ENCODE measurements at regions of chr12 and their contacts with region 1.

Region 1: GRCh38 chr12:14845350-14845750 is 2.0 kb upstream of the ART4 start:
- DNase-seq: peak in 2 of 5 donors; percentile 49 to 51
- ATAC-seq: peak; percentile 28 to 51 (median 41)
- H3K4me3 ChIP-seq: no peak overlapping the region
- H3K27ac ChIP-seq: peak overlapping the region in 10 of 12 donors; percentile 29 to 72 (median 46)
- H3K4me1 ChIP-seq: peaks cover 3 to 70% (median 50%) of the 10 kb centered on the region in 12 donors
- H3K27me3 ChIP-seq: no peaks in the 10 kb centered on the region
- CTCF ChIP-seq: peak; percentile 62 to 85 (median 76)
- POLR2A ChIP-seq: no peak

Region 2: DNA sequence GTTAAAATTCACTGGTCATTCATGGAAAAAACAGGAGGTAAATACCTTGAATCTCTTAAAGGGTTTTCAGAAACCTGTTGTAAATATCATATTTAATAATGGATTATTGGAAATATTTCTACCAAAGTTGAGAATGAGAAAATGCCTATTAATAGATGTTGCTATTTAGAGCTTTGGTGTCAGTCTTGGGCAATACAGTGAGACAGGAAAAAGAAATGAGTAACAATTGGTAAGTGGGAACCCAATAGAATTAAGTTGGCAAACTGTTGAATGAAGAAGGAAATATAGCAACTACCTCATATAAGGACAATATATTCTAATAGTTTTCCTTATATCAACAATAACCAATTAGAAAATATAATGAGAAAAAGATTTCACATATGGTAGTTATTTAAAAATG is 401.8 kb before region 1 on chr12:
- intact Hi-C with region 1: no loop called
- DNase-seq: no peak
- ATAC-seq: peak in 3 of 4 donors; percentile 51 to 81 (median 75)
- H3K4me3 ChIP-seq: no peak overlapping the region
- H3K27ac ChIP-seq: peak overlapping the region; percentile 17 to 70 (median 46)
- H3K4me1 ChIP-seq: peaks cover 0 to 29% (median 20%) of the 10 kb centered on the region in 12 donors
- H3K27me3 ChIP-seq: no peaks in the 10 kb centered on the region
- CTCF ChIP-seq: no peak
- POLR2A ChIP-seq: no peak

Region 3: GRCh38 chr12:14769969-14770495 is 75.3 kb before region 1 on chr12:
- intact Hi-C with region 1: loop called in 2 of 10 experiments (anchors 5 kb)
- DNase-seq: peak; percentile 79 to 91 (median 81)
- ATAC-seq: peak; percentile 53 to 67 (median 66)
- H3K4me3 ChIP-seq: peak overlapping the region; percentile 57 to 90 (median 84)
- H3K27ac ChIP-seq: peak overlapping the region; percentile 85 to 99 (median 96)
- H3K4me1 ChIP-seq: peaks cover 0 to 30% (median 10%) of the 10 kb centered on the region in 12 donors
- H3K27me3 ChIP-seq: no peaks in the 10 kb centered on the region
- CTCF ChIP-seq: peak; percentile 59 to 86 (median 70)
- POLR2A ChIP-seq: peak in 1 of 2 donors; percentile 28

Region 4: GRCh38 chr12:14803011-14803829 is 42.1 kb before region 1 on chr12 and contains the starts of genes C12orf60 and WBP11:
- intact Hi-C with region 1: loop called in 4 of 10 experiments (anchors 5 kb)
- DNase-seq: peak; percentile 92 to 97 (median 95)
- ATAC-seq: peak; percentile 100
- H3K4me3 ChIP-seq: peak within 1 kb of the TSS; percentile 74 to 95 (median 82)
- H3K27ac ChIP-seq: peak within 1 kb of the TSS; percentile 52 to 95 (median 88)
- H3K4me1 ChIP-seq: peaks cover 0 to 33% (median 17%) of the 10 kb centered on the region in 12 donors
- H3K27me3 ChIP-seq: no peaks in the 10 kb centered on the region
- CTCF ChIP-seq: no peak
- POLR2A ChIP-seq: peak; percentile 28 to 90
- total RNA-seq, gene C12orf60: 2.0 to 4.6 (median 3.4) TPM
- total RNA-seq, gene WBP11: 20.2 to 62.7 (median 52.7) TPM

Region 5: DNA sequence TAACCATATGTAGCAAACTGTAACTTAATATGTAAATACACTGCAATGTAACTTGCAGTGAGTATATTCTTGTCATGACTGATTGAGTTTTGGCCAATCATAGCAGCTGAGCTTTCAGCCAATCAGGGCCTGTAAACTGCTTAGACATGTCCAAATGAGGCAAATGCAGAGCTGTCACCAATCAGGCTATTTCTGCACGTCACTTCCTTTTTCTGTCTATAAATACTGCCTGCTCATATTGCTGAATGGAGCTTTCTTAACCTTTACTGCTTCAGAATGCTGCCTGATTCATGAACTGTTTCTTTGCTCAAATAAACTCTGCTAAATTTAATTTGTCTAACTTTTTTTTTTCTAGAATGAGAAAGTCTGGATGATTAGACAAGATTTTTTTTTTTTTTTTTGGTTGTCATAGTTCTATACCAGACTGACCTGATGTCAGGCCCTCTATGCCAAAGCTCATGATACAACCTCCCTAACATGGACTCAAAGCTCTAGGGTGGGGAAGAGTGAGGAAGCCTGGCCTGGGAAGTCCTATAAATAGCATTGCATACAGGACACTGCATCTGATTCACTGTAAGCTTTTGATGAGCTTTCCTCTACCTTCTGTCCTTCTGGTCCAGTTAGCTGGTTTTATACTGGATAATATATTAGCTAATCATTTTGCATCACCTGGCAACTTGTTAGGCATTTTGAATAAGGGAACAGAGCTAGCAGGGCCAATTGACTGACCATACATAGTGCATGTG is 28.3 kb after region 1 on chr12:
- intact Hi-C with region 1: no loop called
- DNase-seq: no peak
- ATAC-seq: peak in 3 of 4 donors; percentile 37 to 67 (median 52)
- H3K4me3 ChIP-seq: no peak overlapping the region
- H3K27ac ChIP-seq: no peak overlapping the region
- H3K4me1 ChIP-seq: peaks cover 0 to 6% (median 0%) of the 10 kb centered on the region in 12 donors
- H3K27me3 ChIP-seq: no peaks in the 10 kb centered on the region
- CTCF ChIP-seq: no peak
- POLR2A ChIP-seq: no peak

Region 6: GRCh38 chr12:14892726-14893505 is 47.6 kb after region 1 on chr12:
- intact Hi-C with region 1: loop called in 8 of 10 experiments (anchors 2 to 5 kb)
- DNase-seq: peak in 4 of 5 donors; percentile 45 to 59 (median 50)
- ATAC-seq: peak; percentile 77 to 88 (median 84)
- H3K4me3 ChIP-seq: peak overlapping the region in 2 of 12 donors; percentile 12 to 17
- H3K27ac ChIP-seq: peak overlapping the region; percentile 17 to 90 (median 74)
- H3K4me1 ChIP-seq: peaks cover 0 to 46% (median 17%) of the 10 kb centered on the region in 12 donors
- H3K27me3 ChIP-seq: no peaks in the 10 kb centered on the region
- CTCF ChIP-seq: peak in 6 of 12 donors; percentile 9 to 39 (median 28)
- POLR2A ChIP-seq: no peak

Region 7: GRCh38 chr12:14995583-14996425 is 150.5 kb after region 1 on chr12:
- intact Hi-C with region 1: loop called (anchors 1 to 2 kb)
- DNase-seq: no peak
- ATAC-seq: peak in 2 of 4 donors; percentile 47 to 55
- H3K4me3 ChIP-seq: no peak overlapping the region
- H3K27ac ChIP-seq: peak overlapping the region in 1 of 12 donors; percentile 6
- H3K4me1 ChIP-seq: peaks cover 0 to 22% (median 1%) of the 10 kb centered on the region in 12 donors
- H3K27me3 ChIP-seq: no peaks in the 10 kb centered on the region
- CTCF ChIP-seq: peak; percentile 62 to 88 (median 72)
- POLR2A ChIP-seq: no peak

Region 8: DNA sequence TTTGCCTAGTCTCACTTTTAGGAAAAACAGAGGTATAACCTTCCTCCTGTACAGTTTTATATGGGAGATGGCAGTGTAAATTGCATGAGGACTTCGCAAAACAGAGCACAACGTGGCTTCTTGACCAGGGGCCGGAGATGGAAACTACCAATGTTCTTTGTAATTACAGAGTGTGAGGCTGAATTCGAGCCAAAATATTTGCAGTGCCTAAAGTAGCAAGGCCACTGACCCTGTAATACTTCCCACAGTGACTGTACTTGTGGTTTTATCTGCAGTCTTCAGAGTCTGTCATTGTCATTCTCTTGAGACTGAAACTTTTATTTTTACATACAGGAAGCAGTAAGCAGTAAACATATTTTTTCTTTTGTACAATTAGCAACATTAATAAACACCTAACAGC is 277.0 kb after region 1 on chr12:
- intact Hi-C with region 1: no loop called
- DNase-seq: peak in 1 of 5 donors; percentile 33
- ATAC-seq: peak; percentile 49 to 69 (median 60)
- H3K4me3 ChIP-seq: no peak overlapping the region
- H3K27ac ChIP-seq: peak overlapping the region in 5 of 12 donors; percentile 1 to 33 (median 23)
- H3K4me1 ChIP-seq: peaks cover 0 to 8% (median 0%) of the 10 kb centered on the region in 12 donors
- H3K27me3 ChIP-seq: no peaks in the 10 kb centered on the region
- CTCF ChIP-seq: no peak
- POLR2A ChIP-seq: no peak

Region 9: DNA sequence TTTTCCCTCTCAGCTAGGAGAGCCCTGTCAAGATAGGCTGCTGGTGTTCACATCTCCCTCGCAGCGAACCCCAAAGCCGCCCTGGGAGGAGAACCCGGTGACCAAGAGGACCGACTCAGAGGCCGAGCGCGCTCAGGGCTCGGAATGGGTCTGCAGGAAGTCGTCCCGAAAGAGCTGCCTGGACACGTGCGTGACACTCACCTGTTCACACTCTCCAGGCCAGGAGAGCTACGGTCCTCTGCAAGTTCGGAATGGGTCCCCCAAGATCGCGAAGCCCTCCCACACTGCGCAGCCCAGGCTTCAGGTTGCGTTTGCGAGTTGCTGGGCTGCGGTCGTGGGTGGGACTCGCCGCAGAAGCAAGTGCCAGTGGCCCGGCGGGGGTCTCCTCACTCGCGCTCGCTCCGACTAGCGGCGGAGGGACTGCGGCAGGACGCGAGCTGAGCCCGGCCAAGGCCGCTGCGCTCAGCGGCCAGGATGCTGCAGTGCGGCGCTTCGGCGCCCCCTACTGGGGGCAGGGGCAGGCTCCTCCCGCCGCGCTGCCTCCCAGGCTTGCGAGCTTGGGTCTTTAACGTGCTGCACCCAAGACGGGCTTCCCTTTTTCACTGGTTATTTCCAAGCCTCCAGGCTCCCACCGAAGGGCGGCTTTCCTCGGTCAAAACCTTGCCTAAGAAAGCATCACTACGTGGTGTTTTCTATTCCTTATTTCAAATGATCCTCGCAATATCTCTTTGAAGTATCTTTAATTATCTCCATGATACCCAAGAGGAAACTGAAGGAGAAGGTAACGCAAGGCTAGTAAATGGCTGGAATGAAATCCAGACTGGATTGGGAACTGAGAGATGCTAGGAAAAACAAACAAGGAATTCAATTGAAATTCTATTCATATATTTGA is 375.9 kb after region 1 on chr12 and contains the start of gene RERG:
- intact Hi-C with region 1: loop called in 9 of 10 experiments (anchors 2 to 10 kb)
- DNase-seq: peak; percentile 78 to 92 (median 84)
- ATAC-seq: peak; percentile 84 to 100 (median 98)
- H3K4me3 ChIP-seq: peak within 1 kb of the TSS; percentile 44 to 75 (median 60)
- H3K27ac ChIP-seq: peak within 1 kb of the TSS; percentile 7 to 86 (median 80)
- H3K4me1 ChIP-seq: peaks cover 0 to 12% (median 5%) of the 10 kb centered on the region in 12 donors
- H3K27me3 ChIP-seq: peaks cover 0 to 35% (median 3%) of the 10 kb centered on the region in 9 donors
- CTCF ChIP-seq: peak; percentile 91 to 99 (median 98)
- POLR2A ChIP-seq: no peak
- total RNA-seq, gene RERG: 2.9 to 17.7 (median 4.2) TPM

Region 10: GRCh38 chr12:15256766-15257165 is 411.4 kb after region 1 on chr12:
- intact Hi-C with region 1: no loop called
- DNase-seq: no peak
- ATAC-seq: peak in 3 of 4 donors; percentile 48 to 72 (median 51)
- H3K4me3 ChIP-seq: no peak overlapping the region
- H3K27ac ChIP-seq: peak overlapping the region in 1 of 12 donors; percentile 14
- H3K4me1 ChIP-seq: peaks cover 0 to 5% (median 0%) of the 10 kb centered on the region in 12 donors
- H3K27me3 ChIP-seq: peaks cover 0 to 2% (median 0%) of the 10 kb centered on the region in 9 donors
- CTCF ChIP-seq: no peak
- POLR2A ChIP-seq: no peak